IMR-90 (cell line): ENCODE measurements at regions of chr2 and their contacts with region 1.

Region 1: DNA sequence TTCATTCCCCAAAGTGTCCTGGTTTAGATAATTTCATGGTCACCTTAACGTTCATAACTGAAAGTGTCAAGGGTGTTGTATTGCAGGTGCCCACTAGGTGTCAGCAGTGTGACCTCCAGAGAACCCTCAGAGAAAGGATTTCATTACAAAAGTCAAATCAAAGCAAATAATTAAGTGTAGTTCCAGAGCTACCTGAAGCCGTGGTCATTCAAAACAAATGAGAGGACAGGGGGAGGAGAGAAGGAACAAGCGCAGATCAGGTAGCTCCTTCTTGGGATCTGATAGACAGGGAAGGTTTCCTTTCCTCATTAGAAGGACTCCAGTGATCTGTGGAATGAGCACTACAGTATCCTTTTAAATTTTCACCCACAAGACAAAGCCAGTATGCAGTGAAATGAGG is at the start of gene SLC9A4:
- DNase-seq: peak; percentile 36
- ATAC-seq: peak; percentile 79
- H3K4me3 ChIP-seq: no peak within 1 kb of the TSS
- H3K27ac ChIP-seq: no peak within 1 kb of the TSS
- H3K4me1 ChIP-seq: no peaks in the 10 kb centered on the region
- H3K27me3 ChIP-seq: peaks cover 16% of the 10 kb centered on the region
- CTCF ChIP-seq: peak; percentile 73
- POLR2A ChIP-seq: no peak
- RAD21 ChIP-seq: peak; percentile 70
- total RNA-seq, gene SLC9A4: not detected in 2 replicates

Region 2: DNA sequence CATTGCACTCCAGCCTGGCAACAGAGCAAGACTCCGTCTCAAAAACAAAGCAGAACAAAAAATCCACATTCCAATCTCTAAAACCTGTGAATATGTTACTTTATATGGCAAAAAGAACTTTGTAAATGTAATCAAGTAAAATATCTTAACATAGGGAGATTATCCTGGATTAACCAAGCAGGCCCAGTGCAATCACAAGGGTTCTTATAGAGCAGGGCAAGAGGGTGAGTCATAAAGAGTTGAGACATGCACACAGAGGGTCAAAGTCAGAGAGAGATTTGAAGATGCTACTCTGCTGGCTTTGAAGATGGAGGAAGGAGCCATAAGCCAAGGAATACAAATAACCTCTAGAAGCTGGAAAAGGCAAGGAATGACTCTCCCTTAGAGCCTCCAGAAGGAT is 85.4 kb after region 1 on chr2:
- CTCF ChIA-PET with region 1: no interaction called
- POLR2A ChIA-PET with region 1: no interaction called
- dilution Hi-C with region 1: no loop called
- in situ Hi-C with region 1: no loop called
- intact Hi-C with region 1: no loop called
- DNase-seq: no peak
- ATAC-seq: no peak
- H3K4me3 ChIP-seq: no peak overlapping the region
- H3K27ac ChIP-seq: no peak overlapping the region
- H3K4me1 ChIP-seq: no peaks in the 10 kb centered on the region
- H3K27me3 ChIP-seq: no peaks in the 10 kb centered on the region
- CTCF ChIP-seq: no peak
- POLR2A ChIP-seq: no peak
- RAD21 ChIP-seq: no peak

Region 3: GRCh38 chr2:102592597-102592996 is 119.6 kb after region 1 on chr2:
- CTCF ChIA-PET with region 1: no interaction called
- POLR2A ChIA-PET with region 1: no interaction called
- dilution Hi-C with region 1: no loop called
- in situ Hi-C with region 1: no loop called
- intact Hi-C with region 1: loop called (anchors 1 kb)
- DNase-seq: peak; percentile 8
- ATAC-seq: no peak
- H3K4me3 ChIP-seq: no peak overlapping the region
- H3K27ac ChIP-seq: no peak overlapping the region
- H3K4me1 ChIP-seq: no peaks in the 10 kb centered on the region
- H3K27me3 ChIP-seq: peaks cover 2% of the 10 kb centered on the region; the same call in 1 of the 2 replicates
- CTCF ChIP-seq: peak; percentile 60
- POLR2A ChIP-seq: no peak
- RAD21 ChIP-seq: peak; percentile 64

Region 4: DNA sequence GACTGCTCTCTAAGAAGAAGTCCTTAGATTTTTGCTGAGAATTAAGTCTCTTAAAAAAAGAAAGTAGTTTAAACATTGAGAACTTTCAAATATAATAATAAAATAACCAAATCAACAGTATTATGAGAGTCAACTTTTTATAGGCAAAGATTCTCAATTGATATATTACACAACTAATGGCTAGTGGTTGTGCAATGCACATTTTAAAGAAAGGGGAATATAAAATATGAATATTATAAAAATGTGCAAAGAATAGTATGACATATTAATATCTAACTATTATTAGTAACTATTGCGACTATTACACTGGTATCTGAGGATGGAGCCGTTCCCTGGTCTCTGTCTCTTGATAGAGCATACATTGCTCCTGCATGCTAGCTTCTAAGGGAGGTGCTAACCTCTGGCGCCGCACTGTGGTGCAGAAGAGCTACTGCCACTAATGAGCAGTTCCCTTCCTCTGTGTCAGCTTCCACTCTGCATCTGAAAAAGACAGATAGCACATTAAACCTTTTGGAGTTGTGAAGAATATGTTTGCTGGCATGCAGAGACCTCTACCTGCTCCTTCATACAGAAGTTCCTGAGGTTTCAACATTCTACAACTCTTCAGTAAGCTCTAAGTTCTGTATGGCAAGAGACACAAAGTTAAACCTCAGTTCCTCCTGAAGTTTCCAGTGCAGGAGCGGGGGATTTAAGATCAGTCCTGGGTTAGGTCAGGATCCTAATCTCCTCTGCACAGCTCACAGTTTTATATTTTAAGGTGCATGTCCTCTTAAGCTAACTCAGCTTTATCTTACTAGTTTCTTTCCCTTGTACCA is 142.8 kb after region 1 on chr2:
- CTCF ChIA-PET with region 1: interaction called, 11 read pairs
- POLR2A ChIA-PET with region 1: no interaction called
- dilution Hi-C with region 1: no loop called
- in situ Hi-C with region 1: loop called (anchors 5 kb)
- intact Hi-C with region 1: loop called (anchors 1 kb)
- DNase-seq: peak; percentile 57
- ATAC-seq: peak; percentile 99
- H3K4me3 ChIP-seq: no peak overlapping the region
- H3K27ac ChIP-seq: no peak overlapping the region
- H3K4me1 ChIP-seq: no peaks in the 10 kb centered on the region; the same call in 1 of the 2 replicates
- H3K27me3 ChIP-seq: peaks cover 29% of the 10 kb centered on the region
- CTCF ChIP-seq: peak; percentile 91
- POLR2A ChIP-seq: no peak
- RAD21 ChIP-seq: peak; percentile 90

Region 5: GRCh38 chr2:102703748-102704147 is 230.7 kb after region 1 on chr2:
- CTCF ChIA-PET with region 1: interaction called, 7 read pairs
- POLR2A ChIA-PET with region 1: no interaction called
- dilution Hi-C with region 1: no loop called
- in situ Hi-C with region 1: no loop called
- intact Hi-C with region 1: loop called (anchors 1 kb)
- DNase-seq: peak; percentile 5
- ATAC-seq: peak; percentile 61
- H3K4me3 ChIP-seq: no peak overlapping the region
- H3K27ac ChIP-seq: no peak overlapping the region
- H3K4me1 ChIP-seq: no peaks in the 10 kb centered on the region
- H3K27me3 ChIP-seq: peaks cover 10% of the 10 kb centered on the region
- CTCF ChIP-seq: peak; percentile 35
- POLR2A ChIP-seq: no peak
- RAD21 ChIP-seq: peak; percentile 29

Region 6: DNA sequence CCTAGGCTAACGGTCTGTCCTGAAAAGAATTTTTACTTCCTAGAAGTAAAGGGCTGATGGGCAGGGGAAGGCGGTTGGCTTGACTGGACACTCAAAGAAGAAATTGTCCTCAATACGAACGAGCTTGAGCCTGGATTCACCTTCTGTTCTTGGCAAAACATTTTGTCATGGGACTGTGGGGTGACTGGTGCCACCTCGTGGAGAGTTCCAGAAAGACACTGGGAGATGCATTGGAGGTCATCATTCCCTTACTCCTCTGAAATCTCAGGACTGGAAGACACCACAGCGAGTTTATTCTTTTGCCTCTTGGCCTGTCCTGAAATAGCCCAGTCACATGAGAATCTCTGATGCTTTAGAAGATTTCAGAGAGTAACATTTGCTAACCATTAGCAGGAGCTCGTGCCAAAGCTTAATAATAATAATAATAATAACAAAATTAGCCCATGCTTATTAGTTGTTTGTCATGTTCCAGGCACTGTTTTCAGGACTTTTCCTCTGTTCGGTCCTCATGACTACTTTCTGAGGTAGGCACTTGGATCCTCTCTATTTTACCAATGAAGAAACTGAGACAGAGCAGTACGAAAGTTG is 333.3 kb after region 1 on chr2:
- CTCF ChIA-PET with region 1: no interaction called
- POLR2A ChIA-PET with region 1: no interaction called
- dilution Hi-C with region 1: no loop called
- in situ Hi-C with region 1: no loop called
- intact Hi-C with region 1: loop called (anchors 5 kb)
- DNase-seq: peak; percentile 65
- ATAC-seq: peak; percentile 99
- H3K4me3 ChIP-seq: no peak overlapping the region
- H3K27ac ChIP-seq: no peak overlapping the region
- H3K4me1 ChIP-seq: no peaks in the 10 kb centered on the region
- H3K27me3 ChIP-seq: no peaks in the 10 kb centered on the region
- CTCF ChIP-seq: peak; percentile 81
- POLR2A ChIP-seq: no peak
- RAD21 ChIP-seq: peak; percentile 66